Heart right ventricle (tissue), 16 donors: ENCODE measurements at regions of chr1 and their contacts with region 1.

Region 1: GRCh38 chr1:90277270-90277669 is 282.4 kb downstream of the ZNF326 start:
- DNase-seq: no peak
- ATAC-seq: no peak
- H3K4me3 ChIP-seq: no peak overlapping the region
- H3K27ac ChIP-seq: no peak overlapping the region
- H3K4me1 ChIP-seq: peaks cover 0 to 14% (median 0%) of the 10 kb centered on the region in 9 donors
- H3K27me3 ChIP-seq: no peaks in the 10 kb centered on the region
- CTCF ChIP-seq: no peak

Region 2: GRCh38 chr1:90246069-90246468 is 31.2 kb before region 1 on chr1:
- intact Hi-C with region 1: loop called in 1 of 10 experiments (anchors 5 kb)
- DNase-seq: no peak
- ATAC-seq: no peak
- H3K4me3 ChIP-seq: no peak overlapping the region
- H3K27ac ChIP-seq: no peak overlapping the region
- H3K4me1 ChIP-seq: peaks cover 0 to 5% (median 0%) of the 10 kb centered on the region in 9 donors
- H3K27me3 ChIP-seq: no peaks in the 10 kb centered on the region
- CTCF ChIP-seq: no peak

Region 3: DNA sequence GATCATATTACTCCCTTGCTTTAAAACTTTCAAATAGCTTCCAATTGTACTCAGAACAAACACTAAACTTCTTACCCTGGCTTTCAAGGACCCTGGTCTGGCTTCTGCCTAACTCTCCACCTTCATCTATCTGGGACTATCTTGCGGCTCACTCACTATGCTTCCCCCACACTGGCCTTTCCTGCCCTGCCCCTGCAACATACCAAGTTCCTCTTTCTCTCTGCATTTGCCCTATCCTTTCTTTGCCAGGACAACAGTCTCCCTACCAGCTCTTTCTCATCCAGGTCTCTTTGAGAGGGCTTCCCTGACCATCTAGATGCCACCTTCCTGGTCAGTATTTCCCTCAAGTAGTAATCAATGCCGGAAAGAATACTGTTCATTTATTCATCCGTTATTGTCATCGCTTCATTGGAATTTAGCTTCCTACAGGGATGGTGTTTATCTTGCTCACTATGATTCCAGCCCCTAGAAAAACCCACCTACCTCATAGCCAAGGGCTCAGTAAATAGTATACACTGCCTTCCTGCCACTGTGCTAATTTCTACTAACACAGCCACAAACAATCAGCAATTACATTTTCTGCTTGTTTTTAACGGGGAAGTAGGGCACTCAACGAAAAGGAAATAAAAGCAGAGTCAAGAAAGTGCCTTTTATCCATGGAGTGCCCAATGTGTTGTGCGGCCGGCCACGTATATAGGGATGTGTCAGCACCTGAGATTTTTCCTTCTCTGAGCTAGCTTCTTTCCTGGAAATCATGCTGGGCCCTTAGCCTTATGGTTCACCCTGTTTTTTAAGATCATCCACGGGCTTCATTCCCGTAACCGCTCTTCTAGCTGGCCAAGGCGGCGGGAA is 1222.9 kb after region 1 on chr1:
- intact Hi-C with region 1: no loop called
- DNase-seq: peak in 1 of 2 donors; percentile 5
- ATAC-seq: peak in 1 of 8 donors; percentile 1
- H3K4me3 ChIP-seq: peak overlapping the region; percentile 46 to 75 (median 64)
- H3K27ac ChIP-seq: peak overlapping the region; percentile 9 to 92 (median 82)
- H3K4me1 ChIP-seq: peaks cover 0 to 34% (median 15%) of the 10 kb centered on the region in 9 donors
- H3K27me3 ChIP-seq: no peaks in the 10 kb centered on the region
- CTCF ChIP-seq: no peak